ENCODE measurements at regions of chr1 and their contacts with region 1.

Region 1: DNA sequence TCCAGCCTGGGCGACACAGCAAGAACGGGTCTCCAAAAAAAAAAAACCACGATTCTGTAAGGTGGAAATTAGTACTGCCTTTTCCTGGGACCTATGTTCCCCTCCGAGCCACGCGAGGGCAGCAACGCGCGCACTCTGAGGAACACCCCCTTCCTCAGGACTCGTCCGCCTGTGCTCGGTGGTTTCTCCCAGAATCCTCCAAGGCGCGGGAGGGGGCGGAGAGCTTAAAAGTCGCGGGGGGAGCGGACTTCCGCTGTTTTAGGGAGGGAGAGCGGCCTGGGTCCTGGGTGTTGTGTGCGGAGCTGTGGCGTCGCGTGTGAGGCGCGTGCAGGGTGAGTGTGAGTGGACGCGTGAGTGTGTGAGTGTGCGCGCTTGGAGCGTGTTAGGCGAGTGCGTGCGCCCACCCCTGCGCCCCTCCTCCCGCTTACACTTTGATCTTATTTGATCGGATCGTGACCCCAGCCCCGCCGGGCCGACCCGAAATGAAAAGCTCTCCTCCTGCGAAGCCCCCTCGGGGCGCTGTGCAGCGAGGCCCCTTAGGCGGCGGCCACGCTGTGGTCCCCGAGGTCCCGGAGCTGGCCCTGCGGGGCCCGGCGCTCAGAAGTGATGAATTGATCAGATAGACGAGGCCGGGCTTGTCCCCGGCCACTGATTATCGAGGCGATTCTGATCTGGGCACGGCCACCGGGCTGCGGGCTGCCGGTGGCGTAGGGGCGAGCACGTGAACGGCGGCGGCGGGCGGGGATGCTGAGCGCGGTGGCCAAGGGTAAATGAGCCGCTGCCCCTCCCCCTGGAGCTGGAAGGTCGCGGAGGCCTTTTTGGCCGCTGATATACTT is 9.6 kb downstream of the TMEM167B start:
- DNase-seq: peak; percentile 96
- H3K4me3 ChIP-seq: peak overlapping the region; percentile 71 to 81
- H3K27ac ChIP-seq: peak overlapping the region; percentile 86 to 92
- H3K4me1 ChIP-seq: no peaks in the 10 kb centered on the region; a peak in 1 of 4 replicates
- H3K27me3 ChIP-seq: no peaks in the 10 kb centered on the region
- CTCF ChIP-seq: peak; percentile 85
- EP300 ChIP-seq: peak; percentile 3 to 64; a peak in 3 of 4 replicates
- RAD21 ChIP-seq: peak; percentile 58

Region 2: GRCh38 chr1:109041621-109042468 is 58.3 kb before region 1 on chr1 and contains the start of gene WDR47:
- CTCF ChIA-PET with region 1: interaction called, 4 read pairs
- POLR2A ChIA-PET with region 1: interaction called, 15 read pairs
- DNase-seq: peak; percentile 98
- H3K4me3 ChIP-seq: peak within 1 kb of the TSS; percentile 79 to 99
- H3K27ac ChIP-seq: peak within 1 kb of the TSS; percentile 70 to 71
- H3K4me1 ChIP-seq: no peaks in the 10 kb centered on the region; a peak in 1 of 4 replicates
- H3K27me3 ChIP-seq: no peaks in the 10 kb centered on the region
- CTCF ChIP-seq: no peak
- EP300 ChIP-seq: 0 out of 4 replicates have a peak, but pooled peaks of 1 of the 2 experiments have one; percentile 16
- RAD21 ChIP-seq: no peak
- polyA plus RNA-seq, gene WDR47: 7.9 and 11.1 TPM in 2 replicates

Region 3: DNA sequence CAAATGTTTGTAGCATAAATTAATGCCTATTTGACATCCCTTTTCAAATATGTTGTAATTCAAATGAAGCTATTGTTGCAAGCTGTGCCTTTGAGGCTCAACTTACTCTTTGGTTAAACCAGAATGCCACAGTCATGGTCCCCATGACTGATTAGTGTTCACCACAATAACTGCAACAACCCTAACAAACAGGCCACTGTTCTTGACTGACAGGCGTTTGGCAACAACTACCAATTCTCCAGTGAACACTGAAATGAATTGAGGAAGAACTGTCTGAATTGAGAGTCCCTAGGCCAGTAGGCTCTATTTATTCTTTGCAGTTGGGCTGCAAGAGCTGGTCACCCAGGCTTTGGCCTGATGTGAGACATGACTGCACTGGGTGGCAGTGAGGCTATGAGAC is 16.2 kb before region 1 on chr1:
- CTCF ChIA-PET with region 1: interaction called, 17 read pairs
- POLR2A ChIA-PET with region 1: interaction called, 8 read pairs
- DNase-seq: no peak
- H3K4me3 ChIP-seq: no peak overlapping the region
- H3K27ac ChIP-seq: no peak overlapping the region
- H3K4me1 ChIP-seq: no peaks in the 10 kb centered on the region; a peak in 1 of 4 replicates
- H3K27me3 ChIP-seq: no peaks in the 10 kb centered on the region
- CTCF ChIP-seq: no peak
- EP300 ChIP-seq: no peak
- RAD21 ChIP-seq: no peak

Region 4: DNA sequence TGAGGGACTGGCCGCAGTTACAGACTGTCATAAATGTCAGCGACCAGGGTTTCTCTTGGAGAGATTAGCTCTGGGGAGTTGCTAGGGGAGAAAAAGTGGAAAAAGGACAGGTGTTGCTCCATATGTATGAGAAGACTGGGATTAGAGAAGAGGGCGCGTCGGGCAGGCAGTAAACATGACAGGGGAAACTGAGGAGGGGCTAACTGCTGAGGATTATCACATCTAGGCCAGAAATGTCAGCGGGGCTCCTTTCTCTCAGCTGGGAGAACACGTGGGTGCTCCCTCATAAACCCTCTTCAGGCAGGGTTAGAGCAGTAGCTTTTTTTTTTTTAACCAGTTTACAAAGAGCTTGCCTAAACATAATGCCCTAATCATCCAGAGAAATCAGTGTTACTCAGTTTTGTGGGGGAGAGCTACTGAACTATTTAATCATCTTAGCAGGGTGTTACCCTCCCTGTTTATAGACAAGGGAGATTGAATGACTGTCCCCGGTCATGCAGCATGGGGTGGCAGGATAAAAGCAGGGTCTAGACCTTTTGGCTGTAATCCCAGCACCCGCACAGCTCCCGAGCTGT is 48.9 kb after region 1 on chr1:
- CTCF ChIA-PET with region 1: no interaction called
- POLR2A ChIA-PET with region 1: no interaction called
- DNase-seq: no peak
- H3K4me3 ChIP-seq: no peak overlapping the region
- H3K27ac ChIP-seq: no peak overlapping the region
- H3K4me1 ChIP-seq: no peaks in the 10 kb centered on the region
- H3K27me3 ChIP-seq: no peaks in the 10 kb centered on the region
- CTCF ChIP-seq: no peak
- EP300 ChIP-seq: no peak
- RAD21 ChIP-seq: no peak

Region 5: GRCh38 chr1:109213785-109214468 is 113.8 kb after region 1 on chr1 and contains the start of gene SARS1:
- CTCF ChIA-PET with region 1: interaction called, 3 read pairs
- POLR2A ChIA-PET with region 1: interaction called, 11 read pairs
- DNase-seq: peak; percentile 97
- H3K4me3 ChIP-seq: peak within 1 kb of the TSS; percentile 88 to 89
- H3K27ac ChIP-seq: peak within 1 kb of the TSS; percentile 86 to 89
- H3K4me1 ChIP-seq: peaks cover 5 to 21% of the 10 kb centered on the region in 2 experiments; a peak in 3 of 4 replicates
- H3K27me3 ChIP-seq: no peaks in the 10 kb centered on the region
- CTCF ChIP-seq: no peak
- EP300 ChIP-seq: no peak
- RAD21 ChIP-seq: no peak
- polyA plus RNA-seq, gene SARS1: 98.3 and 106 TPM in 2 replicates